ENCODE measurements at regions of chr11 and their contacts with region 1.

Region 1: DNA sequence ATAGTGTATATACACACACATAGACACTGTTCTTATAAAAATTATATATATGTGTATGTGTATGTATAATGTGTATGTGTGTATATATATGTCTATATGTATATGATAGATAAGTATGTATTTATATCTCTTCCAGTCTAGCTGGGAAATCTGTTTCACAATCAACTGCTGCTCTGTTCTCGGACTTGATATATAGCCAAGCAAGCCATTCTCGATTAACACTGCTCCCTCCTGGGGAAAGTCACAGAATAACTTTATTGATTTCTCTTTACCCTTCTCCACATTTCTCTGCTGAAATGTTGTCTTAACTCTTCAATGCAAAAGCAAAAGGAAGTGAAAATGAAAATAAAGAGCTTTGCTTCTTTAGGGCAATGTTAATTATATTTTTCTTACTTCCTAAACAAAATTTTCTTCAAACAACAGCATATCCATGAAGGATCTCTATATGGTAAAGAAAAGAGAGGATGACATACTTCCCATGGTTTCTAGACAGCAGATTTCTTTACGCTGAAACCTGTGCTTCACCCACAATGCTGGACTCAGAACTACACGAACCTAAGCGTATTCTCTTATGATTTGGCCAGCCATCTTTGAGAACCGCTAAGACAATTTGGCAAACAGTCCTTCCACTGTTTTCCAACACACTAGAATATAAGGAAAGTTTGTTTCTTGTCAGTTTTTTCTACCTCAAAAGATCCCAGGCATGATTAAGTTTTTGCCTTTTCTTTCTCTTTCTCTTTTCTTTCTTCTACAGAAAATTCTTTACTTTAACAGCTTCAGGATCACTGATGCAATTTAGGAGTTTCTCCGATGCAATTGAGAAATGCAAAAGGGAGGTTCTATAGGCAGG is 2.0 kb downstream of the BLID start:
- DNase-seq: no peak
- ATAC-seq: no peak

Region 2: DNA sequence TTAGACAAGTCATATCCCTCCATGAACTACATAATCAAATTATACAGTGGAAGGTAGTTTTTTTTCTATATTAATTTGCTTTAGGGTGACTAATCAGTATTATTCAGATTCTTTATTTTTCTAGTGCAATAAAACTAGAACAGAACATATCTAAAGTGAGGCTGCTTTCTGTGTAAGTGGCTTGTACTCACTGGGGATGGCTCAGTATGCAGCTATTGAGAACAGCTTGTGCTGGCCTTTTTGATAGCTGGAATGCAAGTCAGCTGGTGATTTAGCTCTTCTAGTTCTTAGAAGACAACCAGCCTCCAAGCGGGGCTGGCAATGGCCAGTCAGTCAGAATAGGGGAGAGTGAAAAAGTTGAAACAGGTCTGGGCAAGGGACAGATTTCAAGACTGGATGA is 117.5 kb before region 1 on chr11:
- intact Hi-C with region 1: no loop called
- DNase-seq: no peak
- ATAC-seq: peak; percentile 71

Region 3: DNA sequence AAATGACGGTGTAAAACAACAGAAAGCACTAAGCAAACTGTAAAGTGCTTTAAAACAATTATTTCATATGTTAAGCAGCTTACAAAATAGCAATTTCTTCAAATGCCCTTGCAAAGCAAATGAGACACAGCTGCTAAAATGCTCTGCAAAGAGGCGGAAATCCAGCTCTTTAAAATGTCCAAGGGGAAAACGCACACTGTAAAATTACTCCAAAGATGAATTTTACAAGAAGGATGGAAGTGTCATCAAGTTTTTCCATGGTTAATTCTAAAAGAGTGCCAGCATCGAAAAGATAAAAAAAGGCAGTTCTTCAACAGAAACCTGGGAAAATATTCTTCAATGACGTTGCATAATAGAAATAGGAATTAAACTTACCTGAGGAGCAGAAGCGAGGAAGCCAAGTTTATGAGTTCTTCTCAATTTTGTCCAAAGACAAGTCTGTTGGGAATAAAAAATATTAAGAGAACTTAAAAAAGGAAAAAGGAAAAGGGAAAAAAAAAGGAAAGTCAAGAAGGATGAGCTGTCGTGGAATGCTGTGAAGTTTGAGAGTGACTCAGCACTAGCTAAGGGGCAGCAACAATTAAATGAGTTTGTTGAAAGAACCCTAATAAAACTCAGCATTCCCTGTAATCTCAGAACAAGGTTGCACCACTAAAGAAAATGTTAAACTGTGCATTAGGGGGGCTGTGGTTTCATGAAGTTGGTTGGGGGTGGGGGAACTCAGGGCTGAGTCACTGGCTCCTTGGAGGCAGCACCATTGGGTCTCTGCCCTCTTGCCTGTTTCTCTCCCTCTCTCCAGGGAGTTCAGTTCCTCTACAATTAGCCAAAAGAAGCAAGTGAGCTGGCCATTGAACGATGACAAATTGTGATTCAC is 66.1 kb after region 1 on chr11:
- intact Hi-C with region 1: no loop called
- DNase-seq: no peak
- ATAC-seq: peak; percentile 49

Region 4: DNA sequence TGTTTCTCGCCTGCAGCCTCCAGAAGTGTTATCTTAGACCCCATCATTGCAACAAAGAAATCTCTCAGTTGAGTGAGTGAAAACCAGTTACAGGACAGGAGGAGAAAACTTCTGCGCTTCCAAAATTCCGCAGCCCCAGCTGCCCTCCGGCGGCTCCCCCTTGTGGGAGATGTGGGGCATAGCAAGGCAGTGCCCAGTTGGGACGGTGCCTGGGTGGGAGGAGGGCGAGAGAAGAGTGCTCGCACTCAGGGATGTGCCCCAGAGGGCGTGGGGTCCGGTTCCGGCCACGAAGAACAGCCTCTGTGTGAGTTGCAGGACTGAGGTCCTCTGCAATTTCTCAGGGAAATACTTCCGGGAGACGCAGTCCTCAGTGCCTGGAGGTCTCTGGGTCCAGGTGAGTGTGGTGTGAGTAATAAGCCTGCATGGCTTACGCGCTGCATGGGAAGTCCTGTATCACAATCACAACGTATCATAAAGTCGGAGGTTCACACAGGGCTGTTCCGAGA is 88.9 kb after region 1 on chr11:
- intact Hi-C with region 1: loop called (anchors 5 kb)
- DNase-seq: peak; percentile 80
- ATAC-seq: peak; percentile 91

Measured in Right ventricle myocardium superior (tissue), 1 donor.